Activated CD4-positive, alpha-beta T cell treated with anti-CD3 and anti-CD28 coated beads for 36 hours (primary cell): ENCODE measurements at regions of chr11 and their contacts with region 1.

Region 1: DNA sequence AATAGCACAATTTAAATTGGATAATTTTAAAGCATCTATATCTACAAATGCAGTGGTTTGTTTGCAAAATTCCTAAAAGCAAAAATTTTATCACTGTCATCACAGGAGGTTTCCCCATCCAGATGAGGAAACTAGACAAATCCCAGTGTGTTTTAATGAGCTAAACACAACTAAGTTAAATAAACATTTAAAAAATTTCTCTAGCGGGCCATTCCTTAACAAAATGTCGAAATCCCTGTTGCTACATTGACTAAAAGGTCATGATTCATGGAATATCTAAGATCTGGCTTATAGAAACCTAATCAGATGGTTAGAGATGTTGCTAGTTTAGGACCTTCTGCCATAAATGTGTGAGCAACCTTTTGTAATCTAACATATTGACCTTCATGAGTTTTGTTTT is 107.3 kb upstream of the BDNF start:
- DNase-seq: no peak
- ATAC-seq: no peak
- H3K4me3 Mint-ChIP-seq: no peak overlapping the region
- H3K27ac Mint-ChIP-seq: no peak overlapping the region
- H3K4me1 Mint-ChIP-seq: no peaks in the 10 kb centered on the region
- H3K27me3 Mint-ChIP-seq: peaks cover 2% of the 10 kb centered on the region

Region 2: DNA sequence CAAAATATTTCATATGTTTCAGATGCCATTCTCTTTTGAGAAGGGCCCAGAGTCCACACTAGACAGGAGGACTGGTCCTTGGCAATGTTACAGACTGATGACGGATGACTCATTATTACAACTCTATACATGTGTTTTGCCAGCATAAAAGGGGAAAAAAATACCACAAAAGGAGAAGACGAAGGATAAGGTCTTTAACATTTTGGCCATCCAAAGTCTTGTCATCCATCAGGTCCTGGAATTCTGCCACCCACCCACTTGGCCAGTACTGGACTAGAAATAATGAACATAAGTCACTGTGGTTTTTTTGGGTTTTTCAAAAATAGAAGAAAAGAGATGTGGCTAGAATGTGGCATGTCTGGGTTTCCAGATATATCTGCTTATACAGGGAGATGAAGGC is 49.6 kb before region 1 on chr11:
- CTCF ChIA-PET with region 1: no interaction called
- POLR2A ChIA-PET with region 1: no interaction called
- intact Hi-C with region 1: loop called in 1 of 2 experiments (anchors 1 kb)
- DNase-seq: no peak
- ATAC-seq: no peak
- H3K4me3 Mint-ChIP-seq: no peak overlapping the region
- H3K27ac Mint-ChIP-seq: no peak overlapping the region
- H3K4me1 Mint-ChIP-seq: no peaks in the 10 kb centered on the region
- H3K27me3 Mint-ChIP-seq: peaks cover 2% of the 10 kb centered on the region